Activated CD4-positive, alpha-beta T cell treated with anti-CD3 and anti-CD28 coated beads, Interleukin-2, amount 10 ng/mL, durations not matched to agents 24 days and 14 days (primary cell): ENCODE measurements at regions of chr20 and their contacts with region 1.

Region 1: DNA sequence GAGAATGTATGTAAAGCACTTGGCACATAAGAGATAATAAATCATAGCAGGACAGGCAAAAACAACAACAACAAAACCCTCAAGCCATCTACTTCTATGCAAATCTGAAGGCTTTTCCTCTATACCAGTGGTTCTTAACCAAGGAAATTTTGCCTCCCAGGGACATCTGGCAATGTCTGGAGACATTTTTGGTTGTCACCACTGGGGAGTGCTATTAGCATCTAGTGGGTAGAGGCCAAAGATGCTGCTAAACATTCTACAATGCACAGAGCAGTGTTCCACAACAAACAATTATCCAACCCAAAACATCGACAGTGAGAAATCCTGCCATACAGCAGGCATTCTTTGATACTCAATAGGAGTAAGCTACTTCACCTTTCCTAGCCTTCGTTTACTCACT is 28.2 kb downstream of the NDRG3 start:
- DNase-seq: peak; percentile 72
- H3K4me3 Mint-ChIP-seq: no peak overlapping the region
- H3K27ac Mint-ChIP-seq: no peak overlapping the region
- H3K4me1 Mint-ChIP-seq: peaks cover 9% of the 10 kb centered on the region
- H3K27me3 Mint-ChIP-seq: no peaks in the 10 kb centered on the region

Region 2: GRCh38 chr20:36754656-36755222 is 37.1 kb after region 1 on chr20:
- intact Hi-C with region 1: loop called (anchors 2 kb)
- DNase-seq: peak; percentile 86
- H3K4me3 Mint-ChIP-seq: no peak overlapping the region
- H3K27ac Mint-ChIP-seq: no peak overlapping the region
- H3K4me1 Mint-ChIP-seq: peaks cover 11% of the 10 kb centered on the region
- H3K27me3 Mint-ChIP-seq: no peaks in the 10 kb centered on the region

Region 3: GRCh38 chr20:36886859-36887751 is 169.4 kb after region 1 on chr20:
- intact Hi-C with region 1: no loop called
- DNase-seq: peak; percentile 94
- H3K4me3 Mint-ChIP-seq: no peak overlapping the region
- H3K27ac Mint-ChIP-seq: peak overlapping the region; percentile 70
- H3K4me1 Mint-ChIP-seq: peaks cover 8% of the 10 kb centered on the region
- H3K27me3 Mint-ChIP-seq: no peaks in the 10 kb centered on the region